CD8-positive, alpha-beta T cell (primary cell): ENCODE measurements at regions of chr20 and their contacts with region 1.

Region 1: GRCh38 chr20:6811262-6812035 is 44.0 kb downstream of the BMP2 start:
- DNase-seq: no peak
- ATAC-seq: no peak
- H3K4me3 ChIP-seq: no peak overlapping the region
- H3K4me3 Mint-ChIP-seq: no peak overlapping the region
- H3K27ac ChIP-seq: no peak overlapping the region
- H3K27ac Mint-ChIP-seq: no peak overlapping the region
- H3K4me1 ChIP-seq: no peaks in the 10 kb centered on the region
- H3K4me1 Mint-ChIP-seq: no peaks in the 10 kb centered on the region
- H3K27me3 ChIP-seq: no peaks in the 10 kb centered on the region
- H3K27me3 Mint-ChIP-seq: no peaks in the 10 kb centered on the region
- CTCF ChIP-seq: no peak

Region 2: GRCh38 chr20:6767536-6768227 is 43.8 kb before region 1 on chr20 and contains the start of gene BMP2:
- CTCF ChIA-PET with region 1: no interaction called
- POLR2A ChIA-PET with region 1: no interaction called
- intact Hi-C with region 1: loop called in 1 of 2 experiments (anchors 2 kb)
- DNase-seq: peak in 1 of 9 experiments; percentile 12
- ATAC-seq: no peak
- H3K4me3 ChIP-seq: no peak within 1 kb of the TSS
- H3K4me3 Mint-ChIP-seq: no peak within 1 kb of the TSS
- H3K27ac ChIP-seq: no peak within 1 kb of the TSS
- H3K27ac Mint-ChIP-seq: no peak within 1 kb of the TSS
- H3K4me1 ChIP-seq: no peaks in the 10 kb centered on the region
- H3K4me1 Mint-ChIP-seq: peaks cover 3% of the 10 kb centered on the region
- H3K27me3 ChIP-seq: peaks cover 0 to 2% of the 10 kb centered on the region in 2 experiments
- H3K27me3 Mint-ChIP-seq: peaks cover 54% of the 10 kb centered on the region
- CTCF ChIP-seq: no peak
- total RNA-seq, gene BMP2: not detected